SK-N-SH (cell line): ENCODE measurements at regions of chr7 and their contacts with region 1.

Region 1: GRCh38 chr7:158976849-158977593 is 120.7 kb downstream of the DYNC2I1 start:
- DNase-seq: peak; percentile 93
- H3K4me3 ChIP-seq: peak overlapping the region; percentile 42 to 55
- H3K27ac ChIP-seq: no peak overlapping the region; a peak in 1 of 4 replicates
- H3K4me1 ChIP-seq: peaks cover 0 to 14% of the 10 kb centered on the region in 2 experiments; a peak in 1 of 4 replicates
- H3K27me3 ChIP-seq: no peaks in the 10 kb centered on the region
- CTCF ChIP-seq: peak; percentile 99
- EP300 ChIP-seq: no peak
- RAD21 ChIP-seq: peak; percentile 92

Region 2: GRCh38 chr7:158863611-158864506 is 113.2 kb before region 1 on chr7:
- CTCF ChIA-PET with region 1: interaction called, 12 read pairs
- POLR2A ChIA-PET with region 1: interaction called, 6 read pairs
- DNase-seq: peak; percentile 84
- H3K4me3 ChIP-seq: peak overlapping the region; percentile 18 to 49
- H3K27ac ChIP-seq: peak overlapping the region in 1 of 2 experiments; percentile 36; a peak in 1 of 4 replicates
- H3K4me1 ChIP-seq: peaks cover 0 to 20% of the 10 kb centered on the region in 2 experiments; a peak in 1 of 4 replicates
- H3K27me3 ChIP-seq: no peaks in the 10 kb centered on the region
- CTCF ChIP-seq: no peak
- EP300 ChIP-seq: no peak
- RAD21 ChIP-seq: no peak

Region 3: GRCh38 chr7:158910254-158911053 is 66.6 kb before region 1 on chr7:
- CTCF ChIA-PET with region 1: interaction called, 15 read pairs
- POLR2A ChIA-PET with region 1: no interaction called
- DNase-seq: no peak
- H3K4me3 ChIP-seq: no peak overlapping the region
- H3K27ac ChIP-seq: no peak overlapping the region
- H3K4me1 ChIP-seq: no peaks in the 10 kb centered on the region
- H3K27me3 ChIP-seq: no peaks in the 10 kb centered on the region
- CTCF ChIP-seq: no peak
- EP300 ChIP-seq: no peak
- RAD21 ChIP-seq: no peak

Region 4: DNA sequence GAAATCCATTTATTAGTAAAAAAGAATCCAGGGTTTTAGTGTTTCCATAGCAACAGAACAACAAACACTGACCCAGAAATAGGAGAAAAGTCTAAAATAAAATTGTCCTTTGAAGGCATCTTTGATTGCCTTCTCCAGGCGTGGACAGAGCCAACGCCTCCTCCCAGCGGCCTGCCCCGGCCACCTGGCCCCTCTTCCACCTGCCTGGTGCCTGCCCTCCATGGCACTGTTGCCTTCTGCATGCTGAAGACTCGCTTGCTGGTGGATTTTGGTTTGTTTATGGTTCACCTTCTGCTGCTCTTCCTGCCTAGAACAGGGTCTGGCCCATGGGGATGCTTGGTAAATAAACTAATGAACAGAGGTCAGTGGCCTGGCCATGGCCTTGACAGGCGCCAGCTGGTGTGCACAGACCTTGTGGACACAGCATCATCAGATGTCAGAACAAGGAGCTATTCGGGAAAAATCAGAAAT is 13.2 kb before region 1 on chr7:
- CTCF ChIA-PET with region 1: interaction called, 61 read pairs
- POLR2A ChIA-PET with region 1: no interaction called
- DNase-seq: no peak
- H3K4me3 ChIP-seq: no peak overlapping the region
- H3K27ac ChIP-seq: no peak overlapping the region
- H3K4me1 ChIP-seq: no peaks in the 10 kb centered on the region; a peak in 1 of 4 replicates
- H3K27me3 ChIP-seq: peaks cover 3% of the 10 kb centered on the region; the same call in 1 of the 2 replicates
- CTCF ChIP-seq: no peak
- EP300 ChIP-seq: no peak
- RAD21 ChIP-seq: no peak

Region 5: DNA sequence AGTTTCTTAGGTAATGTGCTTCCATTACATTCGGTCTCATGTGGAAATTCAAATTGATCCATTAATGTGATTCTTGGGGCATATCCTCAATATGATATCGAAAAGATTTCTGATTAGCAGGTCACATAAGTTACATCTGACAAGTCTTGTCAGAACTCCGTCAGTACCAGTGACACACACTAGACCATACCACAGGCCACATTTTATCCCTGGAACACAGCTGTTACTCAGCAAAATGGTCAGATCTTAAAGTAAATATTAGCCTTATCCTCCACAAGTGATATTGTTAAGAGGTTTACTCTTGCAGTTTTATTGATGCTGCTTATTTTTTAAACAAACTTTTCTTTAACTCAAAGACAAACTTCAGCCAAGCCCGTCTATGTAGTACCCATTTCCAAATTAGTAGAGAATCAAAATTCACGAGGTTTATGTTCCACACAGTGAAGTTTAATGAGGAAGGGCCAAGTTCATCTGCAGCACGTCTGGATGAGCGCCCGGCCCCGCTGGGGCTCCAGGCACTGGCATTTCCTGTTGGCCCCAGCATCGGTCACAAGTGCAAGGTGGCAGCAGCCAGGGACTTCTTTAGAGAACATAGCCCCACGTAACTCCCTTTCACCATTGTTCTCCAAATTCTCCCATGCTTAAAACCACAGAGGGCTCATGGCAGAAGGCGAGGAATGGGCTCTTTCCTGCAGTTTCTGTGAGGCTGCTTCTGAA is 35.5 kb after region 1 on chr7:
- CTCF ChIA-PET with region 1: interaction called, 12 read pairs
- POLR2A ChIA-PET with region 1: no interaction called
- DNase-seq: no peak
- H3K4me3 ChIP-seq: no peak overlapping the region
- H3K27ac ChIP-seq: no peak overlapping the region
- H3K4me1 ChIP-seq: peaks cover 0 to 17% of the 10 kb centered on the region in 2 experiments; a peak in 1 of 4 replicates
- H3K27me3 ChIP-seq: no peaks in the 10 kb centered on the region
- CTCF ChIP-seq: no peak
- EP300 ChIP-seq: no peak
- RAD21 ChIP-seq: no peak

Region 6: DNA sequence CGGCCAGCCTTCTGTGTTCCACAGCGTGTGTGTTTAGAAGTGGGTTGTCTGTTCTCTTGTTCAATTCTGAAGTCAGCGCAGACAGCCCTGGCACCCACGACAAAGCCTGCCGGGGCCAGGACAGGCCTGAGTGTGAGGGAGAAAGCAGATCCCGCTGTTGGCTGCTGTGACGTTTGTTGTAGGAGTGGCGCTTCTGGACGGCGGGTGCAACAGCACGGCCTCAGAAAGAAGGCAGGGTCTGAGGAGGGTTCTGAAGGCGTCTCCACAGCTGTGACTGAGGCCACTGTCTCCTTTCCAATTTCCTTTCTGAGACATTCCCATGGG is 91.4 kb after region 1 on chr7:
- CTCF ChIA-PET with region 1: no interaction called
- POLR2A ChIA-PET with region 1: no interaction called
- DNase-seq: no peak
- H3K4me3 ChIP-seq: no peak overlapping the region
- H3K27ac ChIP-seq: no peak overlapping the region
- H3K4me1 ChIP-seq: peaks cover 0 to 7% of the 10 kb centered on the region in 2 experiments; a peak in 1 of 4 replicates
- H3K27me3 ChIP-seq: no peaks in the 10 kb centered on the region
- CTCF ChIP-seq: no peak
- EP300 ChIP-seq: no peak
- RAD21 ChIP-seq: no peak